ENCODE measurements at regions of chr16 and their contacts with region 1.

Region 1: GRCh38 chr16:52203096-52203495 is 343.8 kb downstream of the TOX3 start:
- DNase-seq: no peak
- H3K4me3 ChIP-seq: no peak overlapping the region
- H3K27ac ChIP-seq: no peak overlapping the region
- H3K4me1 ChIP-seq: no peaks in the 10 kb centered on the region
- H3K27me3 ChIP-seq: no peaks in the 10 kb centered on the region
- CTCF ChIP-seq: no peak

Region 2: GRCh38 chr16:53007095-53007494 is 804.0 kb after region 1 on chr16:
- intact Hi-C with region 1: loop called (anchors 10 kb)
- DNase-seq: no peak
- H3K4me3 ChIP-seq: no peak overlapping the region
- H3K27ac ChIP-seq: no peak overlapping the region
- H3K4me1 ChIP-seq: no peaks in the 10 kb centered on the region
- H3K27me3 ChIP-seq: no peaks in the 10 kb centered on the region
- CTCF ChIP-seq: no peak